ENCODE measurements at regions of chr1 and their contacts with region 1.

Region 1: GRCh38 chr1:39391691-39392679 is 99.5 kb upstream of the BMP8A start:
- DNase-seq: no peak
- H3K4me3 ChIP-seq: no peak overlapping the region
- H3K4me3 Mint-ChIP-seq: peak overlapping the region in 5 of 8 donors; percentile 3 to 41 (median 13)
- H3K27ac ChIP-seq: no peak overlapping the region
- H3K27ac Mint-ChIP-seq: peak overlapping the region; percentile 1 to 83 (median 65)
- H3K4me1 ChIP-seq: peaks cover 64% of the 10 kb centered on the region
- H3K4me1 Mint-ChIP-seq: peaks cover 55 to 79% (median 69%) of the 10 kb centered on the region in 4 donors
- H3K27me3 ChIP-seq: no peaks in the 10 kb centered on the region
- H3K27me3 Mint-ChIP-seq: no peaks in the 10 kb centered on the region

Region 2: GRCh38 chr1:39378377-39378776 is 13.6 kb before region 1 on chr1:
- CTCF ChIA-PET with region 1: interaction called, 10 read pairs
- POLR2A ChIA-PET with region 1: no interaction called
- intact Hi-C with region 1: no loop called
- DNase-seq: peak in 1 of 5 donors; percentile 6
- H3K4me3 ChIP-seq: no peak overlapping the region
- H3K4me3 Mint-ChIP-seq: no peak overlapping the region
- H3K27ac ChIP-seq: no peak overlapping the region
- H3K27ac Mint-ChIP-seq: peak overlapping the region in 5 of 7 donors; percentile 2 to 91 (median 76)
- H3K4me1 ChIP-seq: no peaks in the 10 kb centered on the region
- H3K4me1 Mint-ChIP-seq: peaks cover 0 to 4% (median 3%) of the 10 kb centered on the region in 4 donors
- H3K27me3 ChIP-seq: no peaks in the 10 kb centered on the region
- H3K27me3 Mint-ChIP-seq: no peaks in the 10 kb centered on the region

Region 3: GRCh38 chr1:39508857-39509305 is 116.9 kb after region 1 on chr1:
- CTCF ChIA-PET with region 1: no interaction called
- POLR2A ChIA-PET with region 1: no interaction called
- intact Hi-C with region 1: no loop called
- DNase-seq: peak in 1 of 5 donors; percentile 1
- H3K4me3 ChIP-seq: no peak overlapping the region
- H3K4me3 Mint-ChIP-seq: peak overlapping the region in 2 of 8 donors; percentile 52 to 75
- H3K27ac ChIP-seq: no peak overlapping the region
- H3K27ac Mint-ChIP-seq: peak overlapping the region in 1 of 7 donors; percentile 19
- H3K4me1 ChIP-seq: peaks cover 11% of the 10 kb centered on the region
- H3K4me1 Mint-ChIP-seq: peaks cover 5 to 10% (median 8%) of the 10 kb centered on the region in 4 donors
- H3K27me3 ChIP-seq: no peaks in the 10 kb centered on the region
- H3K27me3 Mint-ChIP-seq: no peaks in the 10 kb centered on the region

Region 4: GRCh38 chr1:40612345-40612831 is 1220.4 kb after region 1 on chr1:
- CTCF ChIA-PET with region 1: no interaction called
- POLR2A ChIA-PET with region 1: no interaction called
- intact Hi-C with region 1: no loop called
- DNase-seq: peak; percentile 62 to 69 (median 65)
- H3K4me3 ChIP-seq: no peak overlapping the region
- H3K4me3 Mint-ChIP-seq: no peak overlapping the region
- H3K27ac ChIP-seq: no peak overlapping the region
- H3K27ac Mint-ChIP-seq: no peak overlapping the region
- H3K4me1 ChIP-seq: no peaks in the 10 kb centered on the region
- H3K4me1 Mint-ChIP-seq: no peaks in the 10 kb centered on the region
- H3K27me3 ChIP-seq: no peaks in the 10 kb centered on the region
- H3K27me3 Mint-ChIP-seq: peaks cover 2% of the 10 kb centered on the region in 2 donors

Measured in CD4-positive, alpha-beta memory T cell (primary cell).